ENCODE measurements at regions of chr17 and their contacts with region 1.

Region 1: GRCh38 chr17:41688699-41689496 is at the start of gene EIF1:
- DNase-seq: peak; percentile 100
- H3K4me3 ChIP-seq: peak within 1 kb of the TSS; percentile 56 to 76 (median 74)
- H3K27ac ChIP-seq: peak within 1 kb of the TSS; percentile 96
- H3K4me1 ChIP-seq: peaks cover 19% of the 10 kb centered on the region
- H3K27me3 ChIP-seq: no peaks in the 10 kb centered on the region
- CTCF ChIP-seq: no peak
- total RNA-seq, gene EIF1: 78.9 to 981 TPM

Region 2: GRCh38 chr17:41629826-41630670 is 58.9 kb before region 1 on chr17:
- CTCF ChIA-PET with region 1: no interaction called
- dilution Hi-C with region 1: no loop called
- in situ Hi-C with region 1: no loop called
- intact Hi-C with region 1: no loop called
- DNase-seq: no peak
- H3K4me3 ChIP-seq: no peak overlapping the region
- H3K27ac ChIP-seq: no peak overlapping the region
- H3K4me1 ChIP-seq: peaks cover 29% of the 10 kb centered on the region
- H3K27me3 ChIP-seq: no peaks in the 10 kb centered on the region
- CTCF ChIP-seq: no peak

Region 3: DNA sequence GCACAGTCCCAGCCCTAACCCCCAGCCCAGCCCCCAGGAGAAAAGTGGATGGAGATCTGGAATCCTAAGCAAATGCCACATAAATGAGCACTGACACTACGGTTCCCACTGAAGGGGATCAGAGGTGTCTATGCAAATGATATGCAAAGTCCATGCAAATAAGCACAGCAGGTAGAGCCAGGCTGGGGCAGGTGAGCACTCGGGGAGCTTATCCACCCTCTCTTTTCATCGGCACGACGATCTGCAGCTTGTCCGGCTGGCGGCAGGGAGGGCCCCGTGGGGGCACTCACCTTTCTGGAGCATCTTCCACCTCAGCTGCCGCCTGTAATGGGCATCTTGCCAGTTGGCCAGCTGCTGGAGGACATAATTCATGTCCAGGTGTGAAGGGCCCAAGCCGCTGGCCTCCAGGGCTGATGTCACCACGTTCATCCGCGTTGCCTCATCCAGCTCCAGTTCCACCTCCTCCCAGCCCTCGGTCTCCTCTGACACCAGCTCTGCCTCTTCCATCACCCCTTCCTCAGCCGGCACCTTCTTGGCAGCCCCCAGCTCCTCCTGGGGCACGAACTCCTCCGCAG is 35.7 kb after region 1 on chr17:
- CTCF ChIA-PET with region 1: no interaction called
- dilution Hi-C with region 1: loop called (anchors 5 kb)
- in situ Hi-C with region 1: no loop called
- intact Hi-C with region 1: no loop called
- DNase-seq: no peak
- H3K4me3 ChIP-seq: no peak overlapping the region
- H3K27ac ChIP-seq: no peak overlapping the region
- H3K4me1 ChIP-seq: peaks cover 7% of the 10 kb centered on the region
- H3K27me3 ChIP-seq: no peaks in the 10 kb centered on the region
- CTCF ChIP-seq: no peak